MCF 10A (cell line): ENCODE measurements at regions of chr1 and their contacts with region 1.

Region 1: DNA sequence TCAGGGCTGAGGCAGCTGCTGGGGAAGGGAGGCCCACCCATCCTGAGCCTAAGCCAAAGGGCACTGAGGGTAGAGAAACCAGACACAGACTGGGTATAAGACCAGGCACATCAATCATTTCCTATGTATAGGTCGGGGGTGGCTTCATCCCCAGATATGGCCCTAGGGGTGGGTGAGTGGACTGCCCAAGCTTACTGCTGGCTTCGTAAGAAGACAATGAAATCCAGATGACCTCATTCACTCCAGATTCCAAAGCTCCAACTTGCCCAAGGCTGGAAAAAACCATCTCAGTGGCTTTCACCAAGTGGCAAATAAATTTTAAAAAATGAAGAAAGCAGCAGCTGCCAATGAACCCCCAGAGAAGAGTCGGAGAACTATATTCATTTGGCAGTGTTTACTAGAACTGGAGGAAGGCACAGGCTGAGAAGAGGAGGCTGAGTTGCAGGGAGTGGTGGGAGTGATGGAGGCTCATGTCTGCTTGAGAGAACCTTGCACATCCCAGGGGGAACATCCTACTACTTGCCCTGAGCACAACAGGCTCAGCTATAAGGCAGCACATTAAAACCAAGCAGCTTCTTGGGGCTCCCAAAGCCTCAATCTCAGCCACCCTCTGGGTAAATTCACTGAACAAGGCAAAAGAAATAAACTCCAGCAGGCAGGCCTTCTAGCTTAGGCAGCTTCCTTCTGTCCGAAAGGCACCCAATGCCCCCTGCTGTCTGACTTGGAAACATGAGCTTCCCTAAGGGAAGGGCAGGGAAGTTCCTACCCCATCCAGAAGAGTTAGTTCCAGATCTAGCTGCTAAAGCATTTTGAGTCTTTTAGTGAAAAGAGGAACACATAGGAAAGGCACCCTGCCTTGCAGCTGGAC is 14.1 kb downstream of the PEA15 start:
- DNase-seq: peak; percentile 61
- H3K4me3 Mint-ChIP-seq: no peak overlapping the region
- H3K27ac Mint-ChIP-seq: no peak overlapping the region
- H3K4me1 Mint-ChIP-seq: peaks cover 7% of the 10 kb centered on the region
- H3K27me3 Mint-ChIP-seq: no peaks in the 10 kb centered on the region
- CTCF ChIP-seq: peak; percentile 47

Region 2: GRCh38 chr1:159798893-159799292 is 420.4 kb before region 1 on chr1:
- CTCF ChIA-PET with region 1: no interaction called
- POLR2A ChIA-PET with region 1: no interaction called
- intact Hi-C with region 1: no loop called
- DNase-seq: peak; percentile 95
- H3K4me3 Mint-ChIP-seq: no peak overlapping the region
- H3K27ac Mint-ChIP-seq: no peak overlapping the region
- H3K4me1 Mint-ChIP-seq: no peaks in the 10 kb centered on the region
- H3K27me3 Mint-ChIP-seq: no peaks in the 10 kb centered on the region
- CTCF ChIP-seq: peak; percentile 83

Region 3: GRCh38 chr1:160078512-160079195 is 140.6 kb before region 1 on chr1:
- CTCF ChIA-PET with region 1: interaction called, 12 read pairs
- POLR2A ChIA-PET with region 1: no interaction called
- intact Hi-C with region 1: no loop called
- DNase-seq: peak; percentile 67
- H3K4me3 Mint-ChIP-seq: no peak overlapping the region
- H3K27ac Mint-ChIP-seq: no peak overlapping the region
- H3K4me1 Mint-ChIP-seq: no peaks in the 10 kb centered on the region
- H3K27me3 Mint-ChIP-seq: peaks cover 64% of the 10 kb centered on the region
- CTCF ChIP-seq: peak; percentile 98

Region 4: GRCh38 chr1:160205242-160206035 is 13.9 kb before region 1 on chr1 and contains the start of gene PEA15:
- CTCF ChIA-PET with region 1: interaction called, 99 read pairs
- POLR2A ChIA-PET with region 1: interaction called, 8 read pairs
- intact Hi-C with region 1: no loop called
- DNase-seq: peak; percentile 75
- H3K4me3 Mint-ChIP-seq: peak within 1 kb of the TSS; percentile 82
- H3K27ac Mint-ChIP-seq: peak within 1 kb of the TSS; percentile 17
- H3K4me1 Mint-ChIP-seq: peaks cover 25% of the 10 kb centered on the region
- H3K27me3 Mint-ChIP-seq: no peaks in the 10 kb centered on the region
- CTCF ChIP-seq: no peak
- total RNA-seq, gene PEA15: 183 and 198 TPM in 2 replicates

Region 5: DNA sequence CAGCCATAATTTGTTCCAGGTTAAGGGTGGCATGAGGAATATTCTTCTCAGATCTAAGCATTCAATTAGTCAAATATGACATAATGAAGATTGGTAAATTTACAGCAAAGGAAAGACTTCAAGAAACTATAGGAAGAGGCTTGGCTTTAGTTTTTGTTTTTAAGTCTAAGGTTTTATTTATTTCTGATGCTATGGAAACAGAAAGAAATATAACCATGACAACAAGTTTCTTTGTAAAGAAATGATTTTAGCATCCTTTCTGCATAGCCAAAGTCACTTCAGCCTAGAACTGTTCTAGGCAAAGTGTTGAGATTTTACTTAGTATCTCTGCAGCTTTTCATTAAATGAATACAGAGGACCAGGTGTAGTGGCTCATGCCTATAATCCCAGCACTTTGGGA is 13.6 kb after region 1 on chr1:
- CTCF ChIA-PET with region 1: interaction called, 83 read pairs
- POLR2A ChIA-PET with region 1: interaction called, 18 read pairs
- intact Hi-C with region 1: no loop called
- DNase-seq: no peak
- H3K4me3 Mint-ChIP-seq: no peak overlapping the region
- H3K27ac Mint-ChIP-seq: peak overlapping the region; percentile 0
- H3K4me1 Mint-ChIP-seq: no peaks in the 10 kb centered on the region
- H3K27me3 Mint-ChIP-seq: no peaks in the 10 kb centered on the region
- CTCF ChIP-seq: no peak

Region 6: DNA sequence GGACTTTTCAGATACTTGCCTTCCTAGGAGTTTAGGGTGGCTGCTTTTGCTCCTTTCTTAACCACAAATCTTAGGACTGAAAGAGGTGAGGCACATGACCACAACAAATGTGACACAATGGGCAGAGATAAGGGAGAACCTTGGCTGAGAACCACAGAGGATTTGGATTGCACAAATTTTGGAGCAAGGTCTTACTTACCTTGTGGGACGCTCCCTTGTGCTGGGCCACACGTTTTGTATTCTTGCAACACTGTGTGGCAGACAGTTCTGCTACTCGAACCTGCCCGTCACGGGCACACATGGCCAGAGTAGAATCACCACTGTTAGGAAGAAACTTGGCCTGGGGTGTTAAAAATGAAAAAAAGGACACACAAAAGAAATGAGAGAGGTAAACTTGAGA is 19.1 kb after region 1 on chr1:
- CTCF ChIA-PET with region 1: interaction called, 83 read pairs
- POLR2A ChIA-PET with region 1: interaction called, 13 read pairs
- intact Hi-C with region 1: no loop called
- DNase-seq: no peak
- H3K4me3 Mint-ChIP-seq: no peak overlapping the region
- H3K27ac Mint-ChIP-seq: peak overlapping the region; percentile 39
- H3K4me1 Mint-ChIP-seq: peaks cover 6% of the 10 kb centered on the region
- H3K27me3 Mint-ChIP-seq: no peaks in the 10 kb centered on the region
- CTCF ChIP-seq: no peak

Region 7: GRCh38 chr1:160244209-160244608 is 24.9 kb after region 1 on chr1:
- CTCF ChIA-PET with region 1: interaction called, 104 read pairs
- POLR2A ChIA-PET with region 1: interaction called, 13 read pairs
- intact Hi-C with region 1: no loop called
- DNase-seq: no peak
- H3K4me3 Mint-ChIP-seq: no peak overlapping the region
- H3K27ac Mint-ChIP-seq: no peak overlapping the region
- H3K4me1 Mint-ChIP-seq: peaks cover 7% of the 10 kb centered on the region
- H3K27me3 Mint-ChIP-seq: no peaks in the 10 kb centered on the region
- CTCF ChIP-seq: no peak